IMR-90 (cell line): ENCODE measurements at regions of chr20 and their contacts with region 1.

Region 1: GRCh38 chr20:48275685-48276342 is 490.5 kb upstream of the SULF2 start:
- DNase-seq: no peak
- ATAC-seq: no peak
- H3K4me3 ChIP-seq: no peak overlapping the region
- H3K27ac ChIP-seq: no peak overlapping the region
- H3K4me1 ChIP-seq: no peaks in the 10 kb centered on the region
- H3K27me3 ChIP-seq: peaks cover 11% of the 10 kb centered on the region
- CTCF ChIP-seq: no peak
- POLR2A ChIP-seq: no peak
- RAD21 ChIP-seq: no peak

Region 2: DNA sequence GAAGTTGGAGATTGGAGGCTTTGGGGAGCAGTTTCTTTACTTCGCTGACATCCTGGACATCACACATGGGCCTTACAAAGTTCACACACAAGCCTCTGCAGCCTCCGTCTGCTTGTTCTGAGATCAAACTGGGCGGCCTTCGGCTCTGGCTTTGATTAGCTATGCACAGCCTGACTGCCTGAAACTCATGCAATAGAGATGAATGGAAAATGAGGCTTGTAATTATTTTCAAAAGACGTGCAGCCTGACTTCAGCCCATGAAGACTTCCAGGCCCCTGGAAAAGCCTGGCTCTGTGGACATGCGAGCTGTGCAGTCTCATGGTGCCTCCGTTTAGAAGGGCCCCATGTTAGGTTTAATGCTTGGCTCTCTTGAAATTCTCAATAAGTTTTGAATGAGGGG is 10.0 kb before region 1 on chr20:
- CTCF ChIA-PET with region 1: no interaction called
- POLR2A ChIA-PET with region 1: interaction called, 10 read pairs
- dilution Hi-C with region 1: no loop called
- in situ Hi-C with region 1: no loop called
- intact Hi-C with region 1: no loop called
- DNase-seq: no peak
- ATAC-seq: no peak
- H3K4me3 ChIP-seq: no peak overlapping the region
- H3K27ac ChIP-seq: no peak overlapping the region
- H3K4me1 ChIP-seq: no peaks in the 10 kb centered on the region
- H3K27me3 ChIP-seq: peaks cover 2% of the 10 kb centered on the region; the same call in 1 of the 2 replicates
- CTCF ChIP-seq: no peak
- POLR2A ChIP-seq: no peak
- RAD21 ChIP-seq: no peak